ENCODE measurements at regions of chrX and their contacts with region 1.

Region 1: DNA sequence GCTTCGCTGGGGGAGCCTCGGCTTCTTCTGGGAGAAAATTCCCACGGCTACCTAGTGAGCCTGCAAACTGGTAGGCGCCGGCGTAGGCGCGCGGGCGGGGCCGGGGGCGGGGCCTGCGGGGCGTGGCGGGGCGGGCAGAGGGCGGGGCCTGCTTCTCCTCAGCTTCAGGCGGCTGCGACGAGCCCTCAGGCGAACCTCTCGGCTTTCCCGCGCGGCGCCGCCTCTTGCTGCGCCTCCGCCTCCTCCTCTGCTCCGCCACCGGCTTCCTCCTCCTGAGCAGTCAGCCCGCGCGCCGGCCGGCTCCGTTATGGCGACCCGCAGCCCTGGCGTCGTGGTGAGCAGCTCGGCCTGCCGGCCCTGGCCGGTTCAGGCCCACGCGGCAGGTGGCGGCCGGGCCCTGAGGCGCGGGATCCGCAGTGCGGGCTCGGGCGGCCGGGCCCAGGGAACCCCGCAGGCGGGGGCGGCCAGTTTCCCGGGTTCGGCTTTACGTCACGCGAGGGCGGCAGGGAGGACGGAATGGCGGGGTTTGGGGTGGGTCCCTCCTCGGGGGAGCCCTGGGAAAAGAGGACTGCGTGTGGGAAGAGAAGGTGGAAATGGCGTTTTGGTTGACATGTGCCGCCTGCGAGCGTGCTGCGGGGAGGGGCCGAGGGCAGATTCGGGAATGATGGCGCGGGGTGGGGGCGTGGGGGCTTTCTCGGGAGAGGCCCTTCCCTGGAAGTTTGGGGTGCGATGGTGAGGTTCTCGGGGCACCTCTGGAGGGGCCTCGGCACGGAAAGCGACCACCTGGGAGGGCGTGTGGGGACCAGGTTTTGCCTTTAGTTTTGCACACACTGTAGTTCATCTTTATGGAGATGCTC is at the start of gene HPRT1:
- DNase-seq: peak; percentile 83
- ATAC-seq: peak; percentile 97
- H3K4me3 ChIP-seq: peak within 1 kb of the TSS; percentile 21 to 68 (median 55)
- H3K4me3 Mint-ChIP-seq: peak within 1 kb of the TSS; percentile 89
- H3K27ac ChIP-seq: peak within 1 kb of the TSS in 1 of 2 donors; percentile 76
- H3K27ac Mint-ChIP-seq: peak within 1 kb of the TSS; percentile 80
- H3K4me1 ChIP-seq: peaks cover 9 to 17% of the 10 kb centered on the region in 2 donors
- H3K4me1 Mint-ChIP-seq: peaks cover 13% of the 10 kb centered on the region
- H3K27me3 ChIP-seq: no peaks in the 10 kb centered on the region
- H3K27me3 Mint-ChIP-seq: no peaks in the 10 kb centered on the region
- CTCF ChIP-seq: no peak
- total RNA-seq, gene HPRT1: 19.5 and 22.7 TPM in 2 replicates

Region 2: DNA sequence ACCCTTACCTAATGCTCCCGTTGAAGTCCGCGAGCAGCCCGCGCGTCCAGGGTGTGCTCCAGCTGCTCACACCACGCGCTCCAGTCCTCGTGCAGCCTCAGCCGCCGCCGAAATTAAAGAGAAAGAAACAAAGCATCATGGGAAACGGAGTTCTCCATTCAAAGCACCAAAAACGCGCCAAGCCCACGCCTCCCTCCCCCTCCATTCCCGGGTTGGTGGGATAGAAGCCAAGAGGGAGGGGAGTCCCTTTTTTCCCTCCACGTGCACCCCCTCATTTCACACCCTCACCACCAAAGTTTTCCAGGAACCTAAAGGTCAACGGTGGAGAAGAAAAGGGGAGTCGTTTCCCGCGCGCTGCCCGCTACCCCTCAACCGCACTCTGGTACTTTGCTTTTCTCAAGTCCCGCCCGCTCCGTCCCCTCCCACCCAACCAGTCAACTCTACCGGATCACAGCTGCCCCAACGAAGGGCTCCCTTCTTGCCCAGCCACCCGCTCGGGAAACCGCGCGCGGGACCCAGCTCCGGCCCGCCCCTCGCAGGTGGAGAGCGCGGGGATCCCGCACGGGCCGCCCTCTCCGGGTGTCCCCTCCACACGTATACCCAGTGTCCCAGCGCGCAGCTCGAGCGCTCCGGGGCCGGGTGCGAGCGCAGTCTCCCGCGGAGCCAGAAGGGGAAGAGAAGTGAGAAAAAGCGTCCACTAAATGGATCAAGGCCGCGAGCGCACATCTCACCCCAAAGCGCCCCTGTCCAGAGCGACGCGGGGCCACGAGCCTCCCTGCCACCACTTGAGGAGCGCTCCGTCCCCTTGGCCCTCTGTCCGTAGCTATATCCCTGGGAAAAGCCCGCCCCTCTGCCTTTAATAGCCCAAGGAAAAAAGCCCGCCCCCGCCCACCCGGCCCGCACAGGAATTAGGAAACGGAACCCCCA is 288.3 kb before region 1 on chrX:
- CTCF ChIA-PET with region 1: no interaction called
- POLR2A ChIA-PET with region 1: no interaction called
- intact Hi-C with region 1: loop called (anchors 5 kb)
- DNase-seq: peak; percentile 53
- ATAC-seq: peak; percentile 58
- H3K4me3 ChIP-seq: peak overlapping the region; percentile 21 to 70 (median 65)
- H3K4me3 Mint-ChIP-seq: peak overlapping the region; percentile 98
- H3K27ac ChIP-seq: no peak overlapping the region
- H3K27ac Mint-ChIP-seq: peak overlapping the region; percentile 28
- H3K4me1 ChIP-seq: peaks cover 0 to 4% of the 10 kb centered on the region in 2 donors
- H3K4me1 Mint-ChIP-seq: peaks cover 11% of the 10 kb centered on the region
- H3K27me3 ChIP-seq: peaks cover 0 to 3% (median 0%) of the 10 kb centered on the region in 4 experiments
- H3K27me3 Mint-ChIP-seq: no peaks in the 10 kb centered on the region
- CTCF ChIP-seq: no peak

Region 3: GRCh38 chrX:134369576-134369975 is 90.7 kb before region 1 on chrX:
- CTCF ChIA-PET with region 1: no interaction called
- POLR2A ChIA-PET with region 1: no interaction called
- intact Hi-C with region 1: no loop called
- DNase-seq: peak; percentile 79
- ATAC-seq: peak; percentile 57
- H3K4me3 ChIP-seq: no peak overlapping the region
- H3K4me3 Mint-ChIP-seq: peak overlapping the region; percentile 0
- H3K27ac ChIP-seq: peak overlapping the region; percentile 45 to 67
- H3K27ac Mint-ChIP-seq: peak overlapping the region; percentile 22
- H3K4me1 ChIP-seq: peaks cover 8 to 19% of the 10 kb centered on the region in 2 donors
- H3K4me1 Mint-ChIP-seq: peaks cover 35% of the 10 kb centered on the region
- H3K27me3 ChIP-seq: no peaks in the 10 kb centered on the region
- H3K27me3 Mint-ChIP-seq: no peaks in the 10 kb centered on the region
- CTCF ChIP-seq: no peak

Region 4: GRCh38 chrX:134388161-134389109 is 71.8 kb before region 1 on chrX:
- CTCF ChIA-PET with region 1: no interaction called
- POLR2A ChIA-PET with region 1: no interaction called
- intact Hi-C with region 1: loop called (anchors 5 kb)
- DNase-seq: peak; percentile 69
- ATAC-seq: peak; percentile 100
- H3K4me3 ChIP-seq: peak overlapping the region in 1 of 5 experiments; percentile 27
- H3K4me3 Mint-ChIP-seq: no peak overlapping the region
- H3K27ac ChIP-seq: peak overlapping the region in 1 of 2 donors; percentile 57
- H3K27ac Mint-ChIP-seq: peak overlapping the region; percentile 67
- H3K4me1 ChIP-seq: peaks cover 13 to 15% of the 10 kb centered on the region in 2 donors
- H3K4me1 Mint-ChIP-seq: peaks cover 15% of the 10 kb centered on the region
- H3K27me3 ChIP-seq: no peaks in the 10 kb centered on the region
- H3K27me3 Mint-ChIP-seq: no peaks in the 10 kb centered on the region
- CTCF ChIP-seq: no peak

Region 5: DNA sequence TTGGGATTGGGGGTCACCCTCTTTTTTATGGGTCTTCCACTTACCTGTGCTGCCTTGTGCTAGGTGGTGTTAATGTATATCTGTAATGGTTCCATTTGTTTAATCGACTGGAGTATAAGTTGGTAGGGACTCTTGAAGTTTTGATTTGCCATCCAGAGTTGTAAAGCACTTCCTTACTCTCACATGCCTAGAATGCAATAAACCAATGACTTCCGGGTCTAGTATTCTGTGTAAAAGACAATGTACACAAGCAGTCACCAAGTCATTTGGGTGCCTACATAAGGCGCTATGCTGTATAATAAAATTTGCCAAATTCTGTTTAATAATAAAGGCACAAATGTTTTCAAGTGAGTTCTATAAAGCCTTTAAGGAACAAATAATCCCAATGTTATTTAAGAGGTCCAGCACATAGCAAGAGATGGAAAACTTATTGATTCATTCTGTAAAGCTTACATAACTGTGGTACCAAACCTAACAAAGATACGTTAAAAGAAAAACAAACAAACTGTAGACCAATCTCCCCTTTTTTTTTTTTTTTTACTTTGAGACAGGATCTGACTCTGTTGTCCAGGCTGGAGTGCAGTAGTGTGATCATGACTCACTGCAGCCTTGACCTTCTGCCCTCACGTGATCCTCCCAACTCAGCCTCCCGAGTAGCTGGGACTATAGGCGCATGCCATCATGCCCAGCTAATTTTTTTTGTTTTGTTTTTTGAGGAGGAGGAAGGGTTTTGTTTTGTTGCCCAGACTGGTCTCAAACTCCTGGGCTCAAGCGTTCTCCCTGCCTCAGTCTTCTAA is 41.7 kb before region 1 on chrX:
- CTCF ChIA-PET with region 1: no interaction called
- POLR2A ChIA-PET with region 1: no interaction called
- intact Hi-C with region 1: no loop called
- DNase-seq: no peak
- ATAC-seq: no peak
- H3K4me3 ChIP-seq: no peak overlapping the region
- H3K4me3 Mint-ChIP-seq: no peak overlapping the region
- H3K27ac ChIP-seq: no peak overlapping the region
- H3K27ac Mint-ChIP-seq: no peak overlapping the region
- H3K4me1 ChIP-seq: no peaks in the 10 kb centered on the region
- H3K4me1 Mint-ChIP-seq: no peaks in the 10 kb centered on the region
- H3K27me3 ChIP-seq: no peaks in the 10 kb centered on the region
- H3K27me3 Mint-ChIP-seq: no peaks in the 10 kb centered on the region
- CTCF ChIP-seq: no peak

Measured in B cell (primary cell).